ENCODE measurements at regions of chr2 and their contacts with region 1.

Region 1: GRCh38 chr2:120223034-120223912 is at the start of gene TMEM185B:
- DNase-seq: peak; percentile 82
- ATAC-seq: peak; percentile 89
- H3K4me3 Mint-ChIP-seq: peak within 1 kb of the TSS; percentile 65
- H3K27ac Mint-ChIP-seq: no peak within 1 kb of the TSS
- H3K4me1 Mint-ChIP-seq: peaks cover 11% of the 10 kb centered on the region
- H3K27me3 Mint-ChIP-seq: peaks cover 51% of the 10 kb centered on the region
- CTCF ChIP-seq: no peak
- total RNA-seq, gene TMEM185B: 9.9 to 14.9 TPM (median 14.3 TPM) in 3 replicates

Region 2: DNA sequence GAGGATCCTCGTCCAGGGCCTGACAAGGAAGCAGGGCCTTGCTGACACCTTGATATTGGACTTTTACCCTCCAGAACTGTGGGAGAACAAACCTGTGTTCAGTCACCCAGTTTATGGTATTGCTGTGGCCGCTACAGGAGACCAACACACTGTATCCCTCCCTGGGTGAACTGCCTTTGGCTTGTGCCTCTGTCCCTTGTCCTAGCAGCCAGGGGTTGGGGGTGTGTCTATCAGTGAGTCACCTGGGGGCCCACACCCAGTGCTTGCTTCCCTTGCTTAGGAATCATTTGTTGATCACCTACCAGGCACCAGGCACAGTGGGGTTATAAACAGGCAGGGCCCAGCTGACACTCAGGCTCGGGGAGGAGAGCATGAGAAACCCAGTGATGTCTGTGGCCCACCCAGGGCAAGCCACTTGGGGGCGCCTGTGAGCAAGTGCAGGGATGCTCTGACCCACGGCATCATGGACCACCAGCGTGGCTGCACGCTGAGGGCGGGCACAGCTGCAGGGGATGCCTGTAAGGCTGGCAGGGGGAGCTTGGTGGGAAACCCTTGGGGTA is 17.2 kb before region 1 on chr2:
- CTCF ChIA-PET with region 1: interaction called, 10 read pairs
- POLR2A ChIA-PET with region 1: no interaction called
- DNase-seq: peak; percentile 85
- ATAC-seq: peak; percentile 86
- H3K4me3 Mint-ChIP-seq: no peak overlapping the region
- H3K27ac Mint-ChIP-seq: no peak overlapping the region
- H3K4me1 Mint-ChIP-seq: peaks cover 4% of the 10 kb centered on the region
- H3K27me3 Mint-ChIP-seq: no peaks in the 10 kb centered on the region; the same call in 1 of the 2 replicates
- CTCF ChIP-seq: peak; percentile 81; the same call in 1 of the 2 replicates

Region 3: DNA sequence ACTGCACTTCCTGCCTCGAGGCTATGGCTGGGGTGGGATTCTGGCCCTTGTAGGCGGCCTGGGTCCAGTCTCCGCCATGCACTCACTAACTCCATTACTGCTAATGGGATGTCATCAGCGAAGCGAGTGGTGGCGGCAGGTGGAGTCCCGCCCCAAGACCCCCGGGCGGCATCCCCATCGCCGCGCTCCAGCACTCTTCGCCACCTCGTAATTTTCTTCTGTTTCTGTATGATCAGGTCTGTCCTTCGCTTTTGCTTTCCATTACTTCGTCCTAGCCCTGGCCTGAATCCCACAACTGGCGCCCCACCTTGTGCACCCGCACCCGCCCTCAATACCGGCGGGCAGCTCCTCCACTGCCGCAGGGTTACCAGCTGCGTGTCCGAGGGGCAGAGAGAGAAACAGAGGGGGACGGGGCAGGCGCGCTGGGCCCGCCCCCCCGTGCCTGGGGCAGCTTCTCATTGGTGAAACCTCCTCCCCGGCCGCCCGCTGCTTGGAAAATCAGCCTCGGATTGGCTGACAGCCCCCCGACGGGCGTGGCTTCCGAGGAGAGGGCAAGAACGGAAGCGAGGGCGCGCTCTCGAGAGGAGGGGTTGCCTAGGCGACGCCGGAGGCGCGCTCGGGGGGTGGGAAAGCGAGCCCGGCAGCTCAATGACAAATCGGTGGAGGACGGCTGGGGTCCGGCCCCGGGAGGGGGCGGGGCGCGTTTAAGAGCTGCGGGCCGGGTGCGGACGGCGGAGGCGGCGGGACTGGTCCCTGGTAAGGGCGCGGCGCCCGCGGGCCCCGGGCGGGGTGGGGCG is 29.1 kb after region 1 on chr2 and contains the start of gene RALB:
- CTCF ChIA-PET with region 1: interaction called, 11 read pairs
- POLR2A ChIA-PET with region 1: interaction called, 3 read pairs
- DNase-seq: peak; percentile 100
- ATAC-seq: peak; percentile 92
- H3K4me3 Mint-ChIP-seq: peak within 1 kb of the TSS; percentile 99
- H3K27ac Mint-ChIP-seq: no peak within 1 kb of the TSS
- H3K4me1 Mint-ChIP-seq: peaks cover 43% of the 10 kb centered on the region
- H3K27me3 Mint-ChIP-seq: peaks cover 65% of the 10 kb centered on the region
- CTCF ChIP-seq: no peak
- total RNA-seq, gene RALB: 17.1 to 18.0 TPM (median 17.9 TPM) in 3 replicates